Sigmoid colon (tissue), 7 donors: ENCODE measurements at regions of chr3 and their contacts with region 1.

Region 1: GRCh38 chr3:126197854-126198584 is 17.6 kb upstream of the ALDH1L1 start:
- DNase-seq: peak; percentile 87
- H3K4me3 ChIP-seq: no peak overlapping the region
- H3K27ac ChIP-seq: no peak overlapping the region
- H3K4me1 ChIP-seq: no peaks in the 10 kb centered on the region
- H3K27me3 ChIP-seq: no peaks in the 10 kb centered on the region
- CTCF ChIP-seq: peak; percentile 65 to 74 (median 68)
- EP300 ChIP-seq: no peak
- POLR2A ChIP-seq: no peak

Region 2: DNA sequence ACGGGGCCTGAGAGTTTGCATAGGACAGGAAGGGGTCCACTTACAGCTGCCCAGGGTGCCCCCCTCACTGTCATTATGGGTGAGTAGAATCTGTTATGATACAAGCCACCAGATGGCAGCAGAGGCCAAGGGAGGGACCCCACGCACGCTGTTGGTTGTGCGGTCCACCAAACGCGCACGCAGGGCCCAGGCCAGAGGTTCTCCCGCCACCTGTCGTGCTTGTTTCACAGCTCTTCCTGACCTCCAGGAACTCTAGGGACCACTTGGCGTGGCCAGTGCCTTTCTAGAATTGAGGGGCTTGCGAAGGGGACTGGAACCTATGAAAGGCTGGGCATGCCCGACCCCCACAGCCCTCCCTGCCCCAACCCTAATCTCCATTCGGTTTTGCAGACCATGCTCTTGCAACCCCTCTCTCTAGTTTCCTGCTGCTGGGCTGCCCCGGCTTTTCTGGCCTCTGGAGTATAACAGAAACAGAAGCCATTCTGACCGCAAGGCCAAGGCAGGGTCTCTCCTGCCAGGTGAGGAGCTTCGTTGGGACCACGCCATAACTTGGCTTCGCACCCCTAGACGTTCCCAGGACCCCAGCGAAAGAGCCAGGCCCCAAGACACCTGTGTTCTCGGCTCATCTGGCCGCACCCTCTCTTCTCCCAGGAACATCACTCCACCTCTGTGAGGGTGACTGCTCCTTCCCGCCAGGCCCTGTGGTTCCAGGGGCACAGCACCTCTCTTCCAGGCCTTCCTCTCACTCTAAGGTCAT is 63.6 kb before region 1 on chr3:
- intact Hi-C with region 1: loop called (anchors 1 kb)
- DNase-seq: peak; percentile 87
- H3K4me3 ChIP-seq: no peak overlapping the region
- H3K27ac ChIP-seq: no peak overlapping the region
- H3K4me1 ChIP-seq: no peaks in the 10 kb centered on the region
- H3K27me3 ChIP-seq: no peaks in the 10 kb centered on the region
- CTCF ChIP-seq: peak; percentile 78 to 85 (median 82)
- EP300 ChIP-seq: no peak
- POLR2A ChIP-seq: no peak